Ovary (tissue), 10 donors: ENCODE measurements at regions of chr5 and their contacts with region 1.

Region 1: DNA sequence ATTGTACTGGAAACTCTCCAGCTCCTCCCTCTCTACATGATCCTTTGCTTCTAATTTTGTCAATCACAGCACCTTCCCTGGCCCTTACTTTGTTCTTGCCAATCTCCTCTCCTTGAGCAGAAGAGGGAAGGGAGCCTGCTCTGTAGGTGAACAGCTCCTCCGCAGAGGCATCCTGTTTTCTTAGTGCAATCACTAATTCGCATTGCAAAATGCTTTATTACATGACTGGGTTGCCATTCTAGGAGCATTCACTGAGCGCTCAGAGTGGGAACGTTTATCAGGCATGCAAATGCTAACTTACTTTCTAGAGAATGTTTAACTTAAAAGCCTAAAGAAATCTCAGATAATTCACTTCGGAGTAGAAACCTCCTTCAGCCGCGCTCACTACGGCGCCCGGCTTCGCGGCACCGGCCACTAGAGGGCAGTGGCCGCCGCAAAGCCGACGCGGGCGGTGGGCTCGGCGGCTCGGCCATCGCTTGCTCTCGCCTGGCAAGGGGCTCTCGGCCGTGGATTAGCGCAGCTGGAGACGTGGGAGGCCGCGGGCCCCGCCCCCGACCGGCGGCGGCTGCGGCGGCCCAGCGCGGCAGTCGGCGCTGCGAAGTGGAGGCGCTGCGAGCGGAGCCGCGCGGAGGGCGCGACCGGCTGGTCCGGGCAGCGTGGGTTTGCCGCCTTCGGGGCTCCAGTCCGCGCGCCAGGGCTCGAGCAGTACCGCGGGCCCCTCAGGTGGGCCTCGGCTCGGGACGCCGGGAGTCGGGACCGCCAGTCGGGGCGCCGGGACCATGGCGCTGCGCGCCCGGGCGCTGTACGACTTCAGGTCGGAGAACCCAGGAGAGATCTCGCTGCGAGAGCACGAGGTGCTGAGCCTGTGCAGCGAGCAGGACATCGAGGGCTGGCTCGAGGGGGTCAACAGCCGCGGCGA is at the start of gene SNX18:
- DNase-seq: peak; percentile 92 to 94 (median 93)
- H3K4me3 ChIP-seq: peak within 1 kb of the TSS; percentile 97
- H3K27ac ChIP-seq: peak within 1 kb of the TSS; percentile 85 to 91
- H3K4me1 ChIP-seq: peaks cover 4% of the 10 kb centered on the region
- H3K27me3 ChIP-seq: no peaks in the 10 kb centered on the region
- CTCF ChIP-seq: peak; percentile 92 to 99 (median 98)
- EP300 ChIP-seq: no peak
- POLR2A ChIP-seq: peak; percentile 51
- total RNA-seq, gene SNX18: 34.7 to 62.4 (median 47.3) TPM

Region 2: DNA sequence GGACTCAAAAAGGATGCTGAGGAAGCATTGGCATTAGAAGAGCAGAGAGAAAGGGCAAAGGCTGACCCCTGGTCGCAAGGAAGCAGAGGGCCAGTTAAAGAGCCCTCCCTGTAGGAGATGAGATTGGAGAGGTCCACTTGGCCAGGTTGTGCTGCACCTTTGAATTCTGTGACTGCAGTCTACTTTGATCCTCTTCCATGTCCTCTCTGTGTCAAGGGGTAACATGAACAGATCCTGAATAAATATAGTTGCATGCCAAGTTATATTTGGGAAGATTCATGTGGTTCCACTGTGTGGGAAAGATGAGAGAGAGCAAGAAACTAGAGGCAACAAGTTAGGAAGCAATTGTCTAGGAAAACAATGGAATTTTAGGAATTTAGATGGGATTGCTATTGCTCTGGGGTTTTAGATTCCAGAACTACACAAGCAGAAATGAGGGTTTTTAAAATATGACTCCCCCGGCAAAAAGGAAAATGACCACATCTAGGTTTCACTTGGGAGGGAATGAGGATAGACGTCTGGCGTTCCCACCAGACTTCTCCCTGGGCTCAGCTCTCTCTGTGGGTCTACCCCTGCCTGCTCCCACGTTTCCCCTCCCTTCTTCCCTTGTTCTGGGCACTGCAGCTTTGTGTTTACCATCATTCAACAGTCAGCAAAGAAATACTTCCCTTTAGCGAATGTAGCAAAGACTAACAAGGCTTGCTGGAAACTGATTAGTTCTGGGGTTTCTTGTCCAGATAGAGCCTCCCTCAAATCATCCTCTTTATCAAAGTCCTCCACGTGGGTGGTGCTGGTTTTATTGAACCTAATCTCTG is 63.8 kb after region 1 on chr5:
- intact Hi-C with region 1: loop called in 1 of 4 experiments (anchors 5 kb)
- DNase-seq: no peak
- H3K4me3 ChIP-seq: no peak overlapping the region
- H3K27ac ChIP-seq: peak overlapping the region in 1 of 2 donors; percentile 59
- H3K4me1 ChIP-seq: peaks cover 8% of the 10 kb centered on the region
- H3K27me3 ChIP-seq: no peaks in the 10 kb centered on the region
- CTCF ChIP-seq: no peak
- EP300 ChIP-seq: no peak
- POLR2A ChIP-seq: no peak

Region 3: DNA sequence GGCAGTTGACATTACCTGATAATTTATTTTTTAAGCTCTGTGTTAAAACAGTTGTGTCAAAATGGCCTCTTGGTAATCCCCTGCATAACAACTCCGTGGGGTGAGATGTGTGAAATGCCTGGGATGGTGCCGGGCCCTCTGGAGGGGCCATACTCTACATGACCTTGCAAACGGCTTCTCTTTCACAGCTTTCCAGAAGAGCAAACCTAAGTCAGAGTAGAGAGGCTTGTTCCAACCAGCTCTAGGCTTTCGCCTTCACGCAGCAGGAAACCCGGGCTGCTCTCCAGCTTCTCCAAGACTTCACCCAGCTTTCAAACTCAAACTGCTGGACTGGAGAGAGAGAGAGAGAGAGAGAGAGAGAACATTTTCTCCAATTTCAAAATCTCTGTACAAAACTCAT is 120.2 kb after region 1 on chr5:
- intact Hi-C with region 1: loop called in 3 of 4 experiments (anchors 10 kb)
- DNase-seq: peak; percentile 70 to 82 (median 73)
- H3K4me3 ChIP-seq: no peak overlapping the region
- H3K27ac ChIP-seq: no peak overlapping the region
- H3K4me1 ChIP-seq: peaks cover 12% of the 10 kb centered on the region
- H3K27me3 ChIP-seq: no peaks in the 10 kb centered on the region
- CTCF ChIP-seq: no peak
- EP300 ChIP-seq: no peak
- POLR2A ChIP-seq: no peak

Region 4: GRCh38 chr5:54646356-54647101 is 129.1 kb after region 1 on chr5:
- intact Hi-C with region 1: loop called in 1 of 4 experiments (anchors 10 kb)
- DNase-seq: peak; percentile 78 to 87 (median 81)
- H3K4me3 ChIP-seq: peak overlapping the region; percentile 7
- H3K27ac ChIP-seq: peak overlapping the region; percentile 76 to 80
- H3K4me1 ChIP-seq: peaks cover 29% of the 10 kb centered on the region
- H3K27me3 ChIP-seq: no peaks in the 10 kb centered on the region
- CTCF ChIP-seq: peak in 1 of 3 donors; percentile 18
- EP300 ChIP-seq: no peak
- POLR2A ChIP-seq: no peak

Region 5: DNA sequence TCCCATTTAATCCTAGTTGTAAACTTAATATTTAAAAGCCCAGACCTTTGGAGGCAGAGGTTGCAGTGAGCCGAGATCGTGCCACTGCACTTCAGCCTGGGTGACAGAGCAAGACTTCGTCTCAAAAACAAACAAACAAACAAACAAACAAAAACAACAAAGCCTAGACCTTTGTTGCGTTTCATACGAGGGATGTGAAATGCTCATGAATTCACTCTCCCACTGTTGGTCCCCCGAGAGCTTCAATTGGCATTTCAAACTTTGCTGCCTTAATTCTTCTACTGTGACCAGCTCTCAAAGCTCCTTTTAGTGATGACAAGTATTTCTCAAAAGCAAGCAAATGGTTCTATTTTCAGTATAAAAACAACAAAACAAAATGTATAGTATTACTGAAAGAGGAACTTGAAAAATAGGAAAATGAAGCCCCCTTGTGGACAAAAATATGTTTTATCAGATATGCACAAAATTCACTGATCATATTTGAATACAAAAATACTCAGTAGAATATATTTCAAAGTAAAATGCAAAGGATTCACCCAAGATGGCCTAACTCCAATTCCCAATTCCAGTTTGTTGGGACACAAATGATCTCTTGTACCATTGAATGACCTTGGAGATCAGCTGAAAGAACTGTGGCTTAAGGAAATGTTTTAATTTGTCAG is 327.6 kb after region 1 on chr5:
- intact Hi-C with region 1: loop called (anchors 1 to 5 kb)
- DNase-seq: no peak
- H3K4me3 ChIP-seq: no peak overlapping the region
- H3K27ac ChIP-seq: peak overlapping the region in 1 of 2 donors; percentile 28
- H3K4me1 ChIP-seq: peaks cover 5% of the 10 kb centered on the region
- H3K27me3 ChIP-seq: no peaks in the 10 kb centered on the region
- CTCF ChIP-seq: peak; percentile 44 to 73 (median 68)
- EP300 ChIP-seq: no peak
- POLR2A ChIP-seq: no peak

Region 6: DNA sequence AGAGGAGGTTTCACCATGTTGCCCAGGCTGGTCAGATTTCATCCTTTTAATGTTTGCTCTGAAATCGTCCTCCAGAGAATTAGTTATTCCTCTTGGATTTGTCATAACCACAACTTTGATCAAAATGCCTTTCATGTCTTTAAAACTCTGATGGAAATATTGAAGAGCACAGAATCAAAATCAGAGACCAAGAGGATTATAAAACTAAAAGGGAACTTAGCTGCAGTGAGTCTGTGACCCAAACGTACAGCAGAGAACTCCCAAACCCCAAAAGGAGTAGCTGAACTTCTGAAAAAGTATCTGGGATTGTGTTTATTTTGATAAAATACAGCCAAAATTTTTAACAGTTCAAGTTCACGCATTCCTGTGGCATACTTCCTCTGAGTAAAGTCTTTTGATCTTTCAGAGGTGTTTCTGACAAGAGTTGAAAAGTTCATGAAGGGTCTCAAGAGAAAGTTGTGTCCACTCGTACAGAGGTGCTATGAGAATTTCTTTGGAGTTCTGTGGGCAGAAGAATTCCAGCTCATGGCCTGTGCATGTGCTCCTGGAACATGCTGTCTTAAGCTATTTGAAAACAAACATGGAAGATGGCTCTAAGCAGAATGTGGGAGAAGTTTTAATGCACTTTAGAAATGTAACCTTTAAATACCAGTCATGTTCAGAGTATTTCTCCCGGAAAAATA is 343.9 kb after region 1 on chr5:
- intact Hi-C with region 1: loop called in 1 of 4 experiments (anchors 5 kb)
- DNase-seq: peak in 1 of 5 donors; percentile 20
- H3K4me3 ChIP-seq: no peak overlapping the region
- H3K27ac ChIP-seq: no peak overlapping the region
- H3K4me1 ChIP-seq: peaks cover 3% of the 10 kb centered on the region
- H3K27me3 ChIP-seq: no peaks in the 10 kb centered on the region
- CTCF ChIP-seq: no peak
- EP300 ChIP-seq: no peak
- POLR2A ChIP-seq: no peak

Region 7: DNA sequence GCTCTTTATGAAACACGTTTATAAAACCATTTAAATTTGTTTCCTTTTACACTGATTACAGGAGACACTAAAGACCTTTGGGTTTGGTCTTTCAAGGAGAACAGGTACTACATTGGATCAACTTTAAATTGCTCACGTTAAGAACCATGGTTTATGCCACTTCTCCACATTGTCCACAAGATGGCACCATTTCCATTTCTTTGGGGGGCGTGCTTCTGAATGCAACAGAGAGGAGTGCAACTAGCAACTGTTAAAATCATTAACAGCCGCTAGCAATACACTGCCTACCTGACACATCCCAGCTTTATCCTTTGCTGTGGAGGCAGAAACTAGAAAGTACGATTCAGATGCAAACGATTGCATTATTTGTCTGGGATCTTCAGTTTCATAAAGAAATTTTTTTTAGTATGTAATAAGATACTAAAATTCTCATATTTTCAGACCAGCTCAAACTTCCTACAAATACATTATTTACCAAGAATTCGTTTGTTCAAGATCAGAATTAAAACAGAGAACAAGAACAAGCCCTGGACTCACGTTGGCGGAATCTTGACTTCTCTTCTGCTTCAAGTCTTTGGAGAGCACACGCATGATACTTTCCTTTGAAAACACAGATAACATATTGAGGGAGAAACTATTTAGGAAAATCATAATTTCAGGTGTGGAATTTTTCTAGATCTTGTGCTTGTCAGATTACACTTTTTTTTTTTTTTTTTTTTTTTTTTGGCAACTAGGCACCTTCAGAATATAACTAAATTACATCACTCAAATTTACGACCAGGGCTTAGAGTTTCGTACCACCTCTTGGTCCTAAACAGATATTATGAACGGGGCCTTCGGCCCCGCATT is 654.8 kb after region 1 on chr5:
- intact Hi-C with region 1: loop called in 1 of 4 experiments (anchors 5 kb)
- DNase-seq: peak in 3 of 5 donors; percentile 24 to 53 (median 25)
- H3K4me3 ChIP-seq: peak overlapping the region; percentile 42
- H3K27ac ChIP-seq: no peak overlapping the region
- H3K4me1 ChIP-seq: peaks cover 4% of the 10 kb centered on the region
- H3K27me3 ChIP-seq: no peaks in the 10 kb centered on the region
- CTCF ChIP-seq: peak; percentile 43 to 69 (median 60)
- EP300 ChIP-seq: no peak
- POLR2A ChIP-seq: no peak